ENCODE measurements at regions of chr6 and their contacts with region 1.

Region 1: DNA sequence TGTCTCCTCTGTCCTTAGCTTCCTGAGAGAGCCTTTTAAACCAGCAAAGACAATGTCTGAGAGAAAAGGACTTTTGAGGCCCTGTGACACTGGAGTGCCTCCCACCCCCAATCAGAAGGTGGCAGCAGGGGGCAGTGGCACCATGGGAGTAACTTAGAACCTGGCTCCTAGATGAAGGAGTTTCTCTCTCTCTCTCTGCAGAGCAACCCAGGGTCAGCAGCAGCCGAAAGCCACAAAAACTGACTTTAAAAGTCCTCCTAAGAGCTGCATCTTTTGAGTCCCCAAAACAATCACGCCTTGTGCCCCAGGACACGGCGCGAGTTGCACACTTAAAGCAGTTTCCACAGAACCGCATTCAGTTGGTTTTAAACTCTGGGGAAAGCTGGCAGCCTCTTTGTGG is 5.3 kb upstream of the TCP11 start:
- DNase-seq: peak; percentile 46
- H3K4me3 ChIP-seq: no peak overlapping the region
- H3K27ac ChIP-seq: no peak overlapping the region
- H3K4me1 ChIP-seq: no peaks in the 10 kb centered on the region
- H3K27me3 ChIP-seq: no peaks in the 10 kb centered on the region
- CTCF ChIP-seq: peak in 3 of 4 experiments; percentile 78 to 81 (median 78)
- POLR2A ChIP-seq: no peak

Region 2: DNA sequence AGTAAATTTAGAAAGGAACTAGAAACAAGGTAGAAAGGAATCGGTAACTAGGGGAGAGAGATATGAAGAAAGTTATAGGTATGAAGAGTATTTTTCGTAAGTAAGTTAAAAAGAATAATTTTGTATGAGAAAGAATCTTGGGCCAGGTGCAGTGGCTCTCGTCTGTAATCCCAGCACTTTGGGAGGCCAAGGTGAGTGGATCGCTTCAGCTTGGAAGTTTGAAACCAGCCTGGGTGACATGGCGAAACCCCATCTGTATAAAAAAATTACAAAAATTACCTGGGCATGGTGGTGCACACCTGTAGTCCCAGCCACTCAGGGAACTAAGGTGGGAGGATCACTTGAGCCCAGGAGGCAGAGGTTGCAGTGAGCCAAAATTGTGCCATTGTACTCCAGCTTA is 47.3 kb before region 1 on chr6:
- intact Hi-C with region 1: no loop called
- DNase-seq: no peak
- H3K4me3 ChIP-seq: no peak overlapping the region
- H3K27ac ChIP-seq: no peak overlapping the region
- H3K4me1 ChIP-seq: no peaks in the 10 kb centered on the region
- H3K27me3 ChIP-seq: no peaks in the 10 kb centered on the region
- CTCF ChIP-seq: no peak
- POLR2A ChIP-seq: no peak

Region 3: GRCh38 chr6:35203680-35204079 is 57.2 kb after region 1 on chr6:
- intact Hi-C with region 1: loop called (anchors 2 kb)
- DNase-seq: no peak
- H3K4me3 ChIP-seq: no peak overlapping the region
- H3K27ac ChIP-seq: no peak overlapping the region
- H3K4me1 ChIP-seq: no peaks in the 10 kb centered on the region
- H3K27me3 ChIP-seq: no peaks in the 10 kb centered on the region
- CTCF ChIP-seq: no peak
- POLR2A ChIP-seq: no peak

Region 4: DNA sequence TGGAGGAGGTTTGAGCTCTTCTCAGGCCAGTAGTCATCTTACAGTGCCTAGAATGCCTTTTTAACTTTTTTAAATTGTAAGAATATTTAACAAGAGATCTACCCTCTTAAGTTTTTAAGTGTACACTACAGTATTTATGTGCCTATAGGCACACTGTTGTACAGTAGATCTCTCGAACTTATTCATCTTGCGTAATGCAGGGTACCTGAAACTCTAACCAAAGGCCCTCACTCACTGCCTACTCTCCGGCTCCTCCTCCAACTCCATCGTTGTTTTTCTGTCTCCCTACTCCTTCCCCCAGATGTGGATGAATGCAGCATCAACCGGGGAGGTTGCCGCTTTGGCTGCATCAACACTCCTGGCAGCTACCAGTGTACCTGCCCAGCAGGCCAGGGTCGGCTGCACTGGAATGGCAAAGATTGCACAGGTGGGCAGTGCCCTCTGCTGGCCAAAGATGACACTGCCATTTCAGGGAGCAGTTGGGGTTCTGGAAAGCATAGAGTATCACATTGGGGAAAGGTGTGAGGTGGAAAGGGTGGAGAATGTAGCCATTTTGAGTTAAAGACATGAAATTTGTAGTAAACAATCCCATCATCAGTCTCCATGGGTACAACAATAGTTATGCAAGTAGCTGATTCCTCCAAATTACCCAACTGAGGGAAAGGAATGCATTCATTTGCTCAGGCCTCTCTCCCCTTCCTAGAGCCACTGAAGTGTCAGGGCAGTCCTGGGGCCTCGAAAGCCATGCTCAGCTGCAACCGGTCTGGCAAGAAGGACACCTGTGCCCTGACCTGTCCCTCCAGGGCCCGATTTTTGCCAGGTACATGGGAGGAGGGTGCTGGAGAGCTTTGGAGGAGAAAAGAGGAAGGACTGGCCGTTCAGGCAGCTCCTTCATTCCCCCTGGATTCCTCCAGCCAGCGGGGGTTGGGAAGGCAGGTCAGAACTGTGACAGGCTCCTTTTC is 94.7 kb after region 1 on chr6:
- intact Hi-C with region 1: loop called (anchors 2 kb)
- DNase-seq: peak; percentile 68
- H3K4me3 ChIP-seq: no peak overlapping the region
- H3K27ac ChIP-seq: no peak overlapping the region
- H3K4me1 ChIP-seq: peaks cover 4% of the 10 kb centered on the region
- H3K27me3 ChIP-seq: no peaks in the 10 kb centered on the region
- CTCF ChIP-seq: peak; percentile 87 to 94 (median 94)
- POLR2A ChIP-seq: no peak